ENCODE measurements at regions of chr11 and their contacts with region 1.

Region 1: DNA sequence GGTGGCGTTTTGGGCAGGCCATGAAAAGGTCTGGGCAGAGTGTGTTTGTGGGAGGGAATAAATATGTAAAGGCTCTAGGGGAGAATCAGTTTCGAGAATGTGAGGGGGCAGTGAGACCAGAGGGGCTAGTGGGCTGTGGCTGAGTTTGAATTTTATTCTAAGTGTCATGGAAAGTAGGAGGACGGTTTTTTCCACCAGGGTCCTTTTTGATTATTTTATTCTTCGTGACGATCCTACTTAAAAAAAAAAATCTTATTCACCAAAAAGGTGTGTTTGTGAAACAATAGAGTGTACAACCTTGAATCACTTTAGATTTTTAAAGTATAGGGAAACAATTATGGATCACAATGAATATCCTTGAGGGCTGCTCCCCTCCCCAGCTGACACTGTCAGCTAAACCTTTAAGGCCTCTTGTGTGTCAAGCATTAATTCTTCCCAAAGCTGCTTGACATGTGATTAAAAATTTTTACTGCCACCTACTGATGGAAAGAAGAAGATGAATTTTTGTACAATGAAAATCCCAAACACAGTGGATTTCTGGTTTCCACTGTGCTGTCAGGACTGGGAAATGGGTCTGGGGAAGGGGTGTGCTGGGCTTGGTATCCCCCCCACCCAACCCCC is 107.5 kb upstream of the OR4B1 start:
- DNase-seq: no peak
- H3K4me3 ChIP-seq: peak overlapping the region in 2 of 3 donors; percentile 34 to 55
- H3K27ac ChIP-seq: peak overlapping the region in 1 of 2 donors; percentile 61
- H3K4me1 ChIP-seq: no peaks in the 10 kb centered on the region
- H3K27me3 ChIP-seq: no peaks in the 10 kb centered on the region
- CTCF ChIP-seq: peak in 2 of 3 donors; percentile 26 to 51
- POLR2A ChIP-seq: no peak

Region 2: DNA sequence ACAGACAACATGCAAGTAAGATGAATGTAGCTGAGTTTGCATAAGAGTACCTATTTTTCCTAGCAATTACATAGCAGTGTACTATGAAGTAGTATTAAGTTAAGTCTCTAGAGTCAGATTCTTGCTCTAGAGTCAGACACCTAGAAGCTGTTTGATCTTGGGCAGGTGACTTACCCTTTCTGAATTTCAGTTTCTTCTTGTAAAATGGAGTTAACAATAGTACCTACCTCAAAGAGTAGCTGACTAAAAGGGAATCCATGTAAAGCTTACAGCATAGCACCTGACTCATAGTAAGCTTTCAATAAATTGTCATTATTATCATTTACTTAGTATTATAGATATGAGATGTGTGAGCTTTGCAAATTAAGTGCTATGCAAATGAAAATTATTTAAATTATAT is 176.6 kb before region 1 on chr11:
- intact Hi-C with region 1: loop called (anchors 10 kb)
- DNase-seq: no peak
- H3K4me3 ChIP-seq: no peak overlapping the region
- H3K27ac ChIP-seq: no peak overlapping the region
- H3K4me1 ChIP-seq: no peaks in the 10 kb centered on the region
- H3K27me3 ChIP-seq: no peaks in the 10 kb centered on the region
- CTCF ChIP-seq: no peak
- POLR2A ChIP-seq: no peak